Ascending aorta (tissue), 2 donors: ENCODE measurements at regions of chr15 and their contacts with region 1.

Region 1: GRCh38 chr15:68730471-68730919 is 90.2 kb downstream of the ANP32A start:
- DNase-seq: peak in 1 of 2 donors; percentile 77
- H3K4me3 ChIP-seq: no peak overlapping the region
- H3K27ac ChIP-seq: no peak overlapping the region
- H3K4me1 ChIP-seq: peaks cover 7% of the 10 kb centered on the region in 2 donors
- H3K27me3 ChIP-seq: no peaks in the 10 kb centered on the region
- CTCF ChIP-seq: peak; percentile 48 to 76 (median 58)

Region 2: DNA sequence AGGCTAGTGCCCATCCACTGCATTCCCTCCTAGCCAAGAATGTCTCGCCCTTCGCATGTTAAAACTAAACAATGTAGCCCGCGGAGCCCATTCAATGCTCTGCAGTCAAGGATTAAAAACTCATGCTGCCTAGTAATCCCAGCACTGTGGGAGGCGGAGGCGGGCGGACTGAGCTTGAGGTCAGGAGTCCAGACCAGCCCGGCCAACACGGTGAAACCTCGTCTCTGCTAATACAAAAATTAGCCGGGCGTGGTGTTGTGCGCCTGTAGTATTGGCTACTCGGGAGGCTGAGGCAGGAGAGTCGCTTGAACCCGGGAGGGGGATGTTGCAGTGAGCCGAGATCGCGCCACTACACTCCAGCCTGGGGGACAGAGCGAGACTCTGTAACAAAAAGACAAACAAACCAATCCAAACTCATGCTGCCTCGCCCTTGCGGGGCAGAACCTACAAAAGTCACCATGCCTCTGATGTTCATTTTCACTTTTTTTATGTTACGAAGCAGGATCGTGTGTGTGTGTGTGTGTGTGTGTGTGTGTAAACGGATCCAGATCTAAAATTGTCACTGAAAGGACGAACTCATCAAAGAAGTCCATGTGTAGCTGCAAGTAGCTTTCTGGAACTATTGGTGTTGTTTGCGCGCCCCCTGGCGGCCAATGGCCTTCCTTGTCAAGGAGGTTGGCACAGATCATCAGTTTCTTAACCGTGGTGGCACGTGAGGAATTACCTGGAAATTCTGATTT is 145.1 kb after region 1 on chr15:
- intact Hi-C with region 1: loop called (anchors 1 kb)
- DNase-seq: peak; percentile 55 to 95
- H3K4me3 ChIP-seq: peak overlapping the region; percentile 49 to 60
- H3K27ac ChIP-seq: no peak overlapping the region
- H3K4me1 ChIP-seq: peaks cover 0 to 2% of the 10 kb centered on the region in 2 donors
- H3K27me3 ChIP-seq: no peaks in the 10 kb centered on the region
- CTCF ChIP-seq: peak; percentile 81 to 89 (median 82)